ENCODE measurements at regions of chr18 and their contacts with region 1.

Region 1: GRCh38 chr18:63016270-63016669 is 300.9 kb downstream of the PHLPP1 start:
- DNase-seq: peak; percentile 57
- H3K4me3 ChIP-seq: no peak overlapping the region
- H3K27ac ChIP-seq: no peak overlapping the region
- H3K4me1 ChIP-seq: no peaks in the 10 kb centered on the region
- H3K27me3 ChIP-seq: no peaks in the 10 kb centered on the region
- CTCF ChIP-seq: peak; percentile 67

Region 2: DNA sequence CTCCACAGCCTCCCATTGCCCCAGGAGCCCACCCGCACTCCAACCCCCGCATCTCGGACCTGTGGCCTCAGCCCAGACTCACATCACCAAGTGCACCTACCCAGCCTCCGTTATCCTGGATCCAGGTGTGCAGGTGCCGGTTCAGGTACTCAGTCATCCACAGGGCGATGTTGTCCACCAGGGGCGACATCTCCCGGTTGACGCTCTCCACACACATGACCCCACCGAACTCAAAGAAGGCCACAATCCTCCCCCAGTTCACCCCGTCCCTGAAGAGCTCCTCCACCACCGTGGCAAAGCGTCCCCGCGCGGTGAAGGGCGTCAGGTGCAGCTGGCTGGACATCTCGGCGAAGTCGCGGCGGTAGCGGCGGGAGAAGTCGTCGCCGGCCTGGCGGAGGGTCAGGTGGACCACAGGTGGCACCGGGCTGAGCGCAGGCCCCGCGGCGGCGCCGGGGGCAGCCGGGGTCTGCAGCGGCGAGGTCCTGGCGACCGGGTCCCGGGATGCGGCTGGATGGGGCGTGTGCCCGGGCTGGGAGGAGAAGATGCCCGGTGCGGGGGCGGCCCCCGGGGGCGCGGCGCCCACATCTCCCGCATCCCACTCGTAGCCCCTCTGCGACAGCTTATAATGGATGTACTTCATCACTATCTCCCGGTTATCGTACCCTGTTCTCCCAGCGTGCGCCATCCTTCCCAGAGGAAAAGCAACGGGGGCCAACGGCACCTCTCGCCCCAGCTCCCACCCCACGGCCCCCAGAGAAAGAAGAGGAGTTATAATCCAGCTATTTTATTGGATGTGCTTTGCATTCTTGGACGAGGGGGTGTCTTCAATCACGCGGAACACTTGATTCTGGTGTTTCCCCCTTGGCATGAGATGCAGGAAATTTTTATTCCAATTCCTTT is 302.0 kb after region 1 on chr18:
- intact Hi-C with region 1: loop called (anchors 2 kb)
- DNase-seq: peak; percentile 84
- H3K4me3 ChIP-seq: peak overlapping the region; percentile 88
- H3K27ac ChIP-seq: peak overlapping the region; percentile 62
- H3K4me1 ChIP-seq: peaks cover 3% of the 10 kb centered on the region
- H3K27me3 ChIP-seq: no peaks in the 10 kb centered on the region
- CTCF ChIP-seq: peak; percentile 76

Region 3: GRCh38 chr18:63444567-63444966 is 428.3 kb after region 1 on chr18:
- intact Hi-C with region 1: loop called (anchors 5 kb)
- DNase-seq: peak; percentile 4
- H3K4me3 ChIP-seq: no peak overlapping the region
- H3K27ac ChIP-seq: no peak overlapping the region
- H3K4me1 ChIP-seq: no peaks in the 10 kb centered on the region
- H3K27me3 ChIP-seq: no peaks in the 10 kb centered on the region
- CTCF ChIP-seq: no peak

Measured in colonic mucosa (tissue), 4 donors.